CD8-positive, alpha-beta memory T cell (primary cell): ENCODE measurements at regions of chr4 and their contacts with region 1.

Region 1: DNA sequence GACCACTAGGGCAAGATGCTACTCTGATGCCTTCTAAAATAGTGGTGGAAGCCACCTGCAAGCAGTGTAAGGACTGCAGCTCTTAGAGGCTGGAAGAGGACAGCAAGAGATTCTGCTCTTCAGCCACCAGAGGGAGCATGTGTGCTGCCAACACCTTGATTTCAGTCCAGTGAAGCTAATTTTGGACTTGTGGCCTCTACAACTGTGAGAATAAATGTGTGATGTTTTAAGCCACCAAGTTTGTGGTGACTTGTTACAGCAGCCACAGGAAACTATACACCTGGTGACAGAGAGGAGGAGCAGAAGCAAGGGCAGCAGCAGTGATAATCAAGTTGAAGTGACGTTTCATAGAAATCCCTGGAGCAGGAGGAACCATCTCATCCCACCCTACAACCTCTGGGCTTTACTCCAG is 55.9 kb downstream of the FGFBP1 start:
- DNase-seq: peak; percentile 8 to 64 (median 33)
- H3K4me3 ChIP-seq: no peak overlapping the region
- H3K4me3 Mint-ChIP-seq: no peak overlapping the region
- H3K27ac ChIP-seq: no peak overlapping the region
- H3K27ac Mint-ChIP-seq: no peak overlapping the region
- H3K4me1 ChIP-seq: no peaks in the 10 kb centered on the region
- H3K4me1 Mint-ChIP-seq: peaks cover 0 to 3% (median 1%) of the 10 kb centered on the region in 3 donors
- H3K27me3 ChIP-seq: no peaks in the 10 kb centered on the region
- H3K27me3 Mint-ChIP-seq: peaks cover 8 to 9% of the 10 kb centered on the region in 2 donors

Region 2: DNA sequence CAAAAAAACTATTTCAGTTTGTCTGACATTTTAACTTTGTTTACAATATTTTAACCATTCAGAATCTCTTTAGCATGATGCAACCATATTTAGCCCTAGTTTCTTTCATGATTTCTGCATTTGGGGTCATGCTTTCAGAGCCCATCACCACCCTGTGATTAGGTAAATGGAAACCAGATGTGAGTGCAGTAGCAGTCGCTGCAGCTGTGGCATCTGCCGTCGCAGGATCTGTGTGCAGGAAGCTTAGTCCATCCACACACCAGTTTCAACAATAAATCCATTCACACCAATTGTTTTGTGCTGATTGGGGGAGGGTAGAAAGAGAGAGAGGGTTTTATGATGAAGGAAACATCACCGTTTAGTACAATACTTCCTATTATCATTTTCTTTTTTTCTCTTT is 749.9 kb before region 1 on chr4:
- CTCF ChIA-PET with region 1: no interaction called
- POLR2A ChIA-PET with region 1: no interaction called
- DNase-seq: no peak
- H3K4me3 ChIP-seq: no peak overlapping the region
- H3K4me3 Mint-ChIP-seq: no peak overlapping the region
- H3K27ac ChIP-seq: no peak overlapping the region
- H3K27ac Mint-ChIP-seq: no peak overlapping the region
- H3K4me1 ChIP-seq: no peaks in the 10 kb centered on the region
- H3K4me1 Mint-ChIP-seq: no peaks in the 10 kb centered on the region
- H3K27me3 ChIP-seq: no peaks in the 10 kb centered on the region
- H3K27me3 Mint-ChIP-seq: peaks cover 7 to 10% of the 10 kb centered on the region in 2 donors

Region 3: DNA sequence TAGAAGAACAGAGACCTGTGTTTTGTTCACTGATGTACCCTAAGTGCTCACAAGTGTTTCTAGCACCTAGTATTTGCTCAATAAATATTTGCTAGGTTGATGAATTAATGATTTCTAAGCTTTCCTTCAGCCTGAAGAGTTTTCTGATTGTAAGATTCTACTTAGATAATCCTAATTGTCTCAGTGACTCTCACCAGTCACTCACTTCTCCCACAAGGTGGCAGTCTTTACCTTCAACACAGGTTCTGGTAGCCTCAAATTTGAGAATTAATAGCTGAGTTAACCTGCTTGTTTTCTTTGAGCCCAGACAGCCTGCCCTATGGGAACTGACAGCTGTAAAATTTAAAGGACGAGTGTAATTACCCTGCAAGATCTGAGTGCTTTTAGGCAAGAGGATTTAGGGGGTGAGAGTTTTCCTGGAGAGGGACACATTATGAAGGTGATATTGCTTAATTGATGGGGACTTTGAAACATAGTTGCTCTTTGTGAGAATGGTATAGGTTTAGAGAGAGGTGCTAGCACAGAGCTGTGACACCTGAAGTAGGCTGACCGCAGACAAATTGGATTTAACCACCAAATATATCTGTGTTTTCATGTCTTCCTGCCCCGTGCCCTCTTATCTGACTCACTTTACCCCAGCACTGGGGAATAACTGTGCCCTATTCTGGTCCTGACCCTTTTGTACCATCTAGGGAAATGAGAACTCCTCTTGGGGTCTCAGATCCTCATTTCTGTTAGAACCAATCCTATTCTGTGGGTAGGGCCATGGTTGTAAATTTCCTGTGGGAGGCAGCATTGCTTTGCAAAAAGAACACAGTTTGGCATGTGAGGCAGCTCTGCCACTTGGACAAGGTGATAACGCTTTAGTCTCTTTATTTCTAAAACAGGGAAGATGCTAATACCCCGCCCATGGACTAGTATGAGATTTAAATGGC is 76.8 kb before region 1 on chr4:
- CTCF ChIA-PET with region 1: interaction called, 14 read pairs
- POLR2A ChIA-PET with region 1: no interaction called
- DNase-seq: peak in 3 of 5 donors; percentile 35 to 54 (median 47)
- H3K4me3 ChIP-seq: no peak overlapping the region
- H3K4me3 Mint-ChIP-seq: no peak overlapping the region
- H3K27ac ChIP-seq: no peak overlapping the region
- H3K27ac Mint-ChIP-seq: no peak overlapping the region
- H3K4me1 ChIP-seq: no peaks in the 10 kb centered on the region
- H3K4me1 Mint-ChIP-seq: peaks cover 12 to 25% (median 16%) of the 10 kb centered on the region in 3 donors
- H3K27me3 ChIP-seq: no peaks in the 10 kb centered on the region
- H3K27me3 Mint-ChIP-seq: no peaks in the 10 kb centered on the region

Region 4: DNA sequence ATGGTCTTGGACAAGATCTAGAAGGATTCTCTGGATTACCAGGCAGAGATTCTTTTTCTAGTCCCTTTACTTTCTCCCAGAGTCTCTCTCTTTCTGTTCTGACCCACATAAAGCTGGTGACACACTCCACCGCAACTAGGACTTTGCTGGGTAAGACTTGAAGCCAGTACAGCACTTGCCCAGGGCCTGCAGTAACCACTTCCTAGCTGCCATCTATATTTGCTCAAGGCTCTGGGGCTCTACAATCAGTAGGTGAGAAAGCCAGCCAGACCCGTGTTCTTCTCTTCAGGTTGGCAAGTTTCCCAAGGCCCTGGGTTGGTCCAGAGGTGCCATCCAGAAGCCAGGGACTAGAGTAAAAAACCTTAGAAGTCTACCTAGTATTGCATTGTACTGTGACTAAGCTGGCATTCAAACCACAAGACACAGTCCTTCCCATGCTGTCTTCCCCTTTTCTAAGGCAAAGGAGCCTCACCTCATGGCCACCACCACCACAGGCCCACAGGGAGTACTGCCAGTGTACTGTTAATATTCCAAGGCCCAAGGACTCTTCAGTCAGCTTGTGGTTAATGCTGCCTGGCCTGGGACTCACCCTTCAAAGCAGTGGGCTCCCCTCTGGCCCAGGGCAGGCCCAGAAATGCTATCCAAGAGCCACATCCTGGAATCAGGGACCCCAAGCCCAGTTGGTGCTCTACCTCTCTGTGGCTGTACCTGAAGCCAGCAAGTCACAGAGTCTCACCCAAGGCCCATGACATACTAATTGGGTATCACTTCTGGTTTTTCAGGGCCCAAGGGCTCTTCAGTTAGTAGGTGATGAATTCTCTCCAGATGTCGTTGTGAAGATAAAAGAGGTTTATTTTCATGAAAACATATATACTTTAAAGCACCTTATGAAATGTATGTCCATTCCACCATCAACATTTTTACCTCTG is 49.9 kb before region 1 on chr4:
- CTCF ChIA-PET with region 1: no interaction called
- POLR2A ChIA-PET with region 1: no interaction called
- DNase-seq: no peak
- H3K4me3 ChIP-seq: no peak overlapping the region
- H3K4me3 Mint-ChIP-seq: no peak overlapping the region
- H3K27ac ChIP-seq: no peak overlapping the region
- H3K27ac Mint-ChIP-seq: no peak overlapping the region
- H3K4me1 ChIP-seq: no peaks in the 10 kb centered on the region
- H3K4me1 Mint-ChIP-seq: peaks cover 0 to 1% (median 0%) of the 10 kb centered on the region in 3 donors
- H3K27me3 ChIP-seq: no peaks in the 10 kb centered on the region
- H3K27me3 Mint-ChIP-seq: no peaks in the 10 kb centered on the region

Region 5: DNA sequence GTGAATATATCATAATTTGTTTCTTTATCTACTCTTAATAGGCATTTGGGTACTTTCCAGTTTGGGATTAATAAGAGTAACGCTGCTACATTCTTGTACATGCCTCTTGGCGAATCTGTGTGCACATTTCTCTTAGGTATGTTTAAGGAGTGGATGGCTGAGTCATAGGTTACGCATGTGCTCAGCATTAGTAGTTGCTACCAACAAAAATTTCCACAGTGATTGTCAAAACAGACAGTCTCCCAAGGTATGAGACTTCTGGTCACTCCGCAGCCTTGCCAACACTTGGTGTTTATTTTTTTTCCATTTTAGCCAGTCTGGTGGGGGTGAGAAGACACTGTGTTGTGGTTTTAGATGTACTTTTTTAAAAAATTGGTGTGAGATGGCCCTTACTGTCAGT is 11.3 kb after region 1 on chr4:
- CTCF ChIA-PET with region 1: interaction called, 10 read pairs
- POLR2A ChIA-PET with region 1: no interaction called
- DNase-seq: no peak
- H3K4me3 ChIP-seq: no peak overlapping the region
- H3K4me3 Mint-ChIP-seq: no peak overlapping the region
- H3K27ac ChIP-seq: no peak overlapping the region
- H3K27ac Mint-ChIP-seq: no peak overlapping the region
- H3K4me1 ChIP-seq: no peaks in the 10 kb centered on the region
- H3K4me1 Mint-ChIP-seq: no peaks in the 10 kb centered on the region
- H3K27me3 ChIP-seq: no peaks in the 10 kb centered on the region
- H3K27me3 Mint-ChIP-seq: peaks cover 14 to 58% of the 10 kb centered on the region in 2 donors

Region 6: GRCh38 chr4:15956179-15956850 is 73.6 kb after region 1 on chr4:
- CTCF ChIA-PET with region 1: interaction called, 13 read pairs
- POLR2A ChIA-PET with region 1: no interaction called
- DNase-seq: peak; percentile 54 to 83 (median 64)
- H3K4me3 ChIP-seq: no peak overlapping the region
- H3K4me3 Mint-ChIP-seq: no peak overlapping the region
- H3K27ac ChIP-seq: no peak overlapping the region
- H3K27ac Mint-ChIP-seq: peak overlapping the region in 1 of 8 donors; percentile 23
- H3K4me1 ChIP-seq: no peaks in the 10 kb centered on the region
- H3K4me1 Mint-ChIP-seq: peaks cover 5 to 19% (median 13%) of the 10 kb centered on the region in 3 donors
- H3K27me3 ChIP-seq: no peaks in the 10 kb centered on the region
- H3K27me3 Mint-ChIP-seq: peaks cover 3 to 14% of the 10 kb centered on the region in 2 donors

Region 7: DNA sequence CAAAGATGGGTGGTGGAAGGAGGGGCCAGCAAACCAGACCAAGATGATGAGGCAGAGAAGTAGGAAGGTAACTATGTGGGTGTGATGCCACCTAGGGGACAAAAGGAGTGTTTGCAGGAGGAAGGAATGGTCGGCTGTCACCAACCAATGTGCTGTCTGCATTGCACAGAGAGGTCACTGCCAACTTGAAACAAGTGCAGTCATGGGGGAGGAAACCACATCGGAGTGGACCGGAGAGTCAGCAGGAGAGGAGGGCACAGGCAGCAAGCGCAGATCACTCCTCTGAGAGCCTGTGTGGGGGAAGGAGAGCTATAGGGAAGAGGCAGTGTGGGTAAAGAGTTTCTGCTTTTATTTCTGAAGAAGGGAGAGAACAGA is 118.8 kb after region 1 on chr4:
- CTCF ChIA-PET with region 1: interaction called, 19 read pairs
- POLR2A ChIA-PET with region 1: no interaction called
- DNase-seq: peak in 3 of 5 donors; percentile 41 to 60 (median 57)
- H3K4me3 ChIP-seq: no peak overlapping the region
- H3K4me3 Mint-ChIP-seq: no peak overlapping the region
- H3K27ac ChIP-seq: no peak overlapping the region
- H3K27ac Mint-ChIP-seq: no peak overlapping the region
- H3K4me1 ChIP-seq: no peaks in the 10 kb centered on the region
- H3K4me1 Mint-ChIP-seq: no peaks in the 10 kb centered on the region
- H3K27me3 ChIP-seq: peaks cover 6% of the 10 kb centered on the region
- H3K27me3 Mint-ChIP-seq: peaks cover 7 to 10% of the 10 kb centered on the region in 2 donors

Region 8: GRCh38 chr4:16056681-16057385 is 174.2 kb after region 1 on chr4:
- CTCF ChIA-PET with region 1: no interaction called
- POLR2A ChIA-PET with region 1: no interaction called
- DNase-seq: no peak
- H3K4me3 ChIP-seq: no peak overlapping the region
- H3K4me3 Mint-ChIP-seq: no peak overlapping the region
- H3K27ac ChIP-seq: no peak overlapping the region
- H3K27ac Mint-ChIP-seq: no peak overlapping the region
- H3K4me1 ChIP-seq: no peaks in the 10 kb centered on the region
- H3K4me1 Mint-ChIP-seq: no peaks in the 10 kb centered on the region
- H3K27me3 ChIP-seq: peaks cover 6% of the 10 kb centered on the region
- H3K27me3 Mint-ChIP-seq: peaks cover 21 to 67% of the 10 kb centered on the region in 2 donors